ENCODE measurements at regions of chr4 and their contacts with region 1.

Region 1: DNA sequence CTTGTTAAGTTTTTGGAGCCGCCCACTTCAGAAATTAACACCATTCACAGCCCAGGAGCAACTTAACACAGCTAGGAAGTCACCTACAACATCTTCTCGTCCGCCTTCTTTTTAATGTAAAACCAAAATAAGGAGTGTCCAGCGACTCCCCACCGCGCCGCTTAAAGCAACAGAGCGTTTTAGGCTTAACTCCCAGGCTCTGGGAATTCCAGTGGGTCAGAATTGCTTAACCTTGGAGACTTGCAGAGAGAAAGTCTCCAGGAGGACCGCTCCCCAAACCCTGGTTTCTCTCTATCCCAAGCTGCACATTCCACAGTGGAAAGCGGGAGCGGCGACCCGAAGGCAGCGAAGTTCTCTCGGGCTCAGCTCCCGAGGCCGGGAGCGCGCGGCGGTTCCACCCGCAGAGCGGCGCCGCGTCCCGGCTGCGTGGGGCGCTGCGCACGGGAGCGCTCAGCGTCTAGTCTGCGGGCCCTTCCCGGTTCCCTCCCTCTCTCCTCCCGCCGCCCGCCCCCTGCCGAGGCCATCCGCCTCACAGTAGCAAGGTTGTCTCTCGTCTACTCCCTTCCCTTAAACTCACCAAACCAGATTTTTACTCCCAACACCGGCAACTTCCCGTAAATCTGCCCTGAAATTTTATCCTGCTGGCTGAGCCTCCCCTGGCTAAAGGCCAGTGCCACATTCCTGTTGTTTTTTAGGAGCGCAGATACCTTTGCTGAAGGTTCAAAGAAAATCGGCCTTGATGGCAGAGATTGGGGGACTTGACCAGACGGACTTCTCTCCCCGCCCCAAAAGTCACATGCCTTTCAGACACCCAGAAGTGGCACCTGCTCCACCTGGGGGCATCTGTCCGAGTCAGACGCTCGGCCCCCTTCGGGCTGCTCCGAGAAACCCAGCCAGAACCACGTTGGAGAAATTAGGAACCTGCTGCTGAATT is at the start of gene RBM47:
- H3K4me3 Mint-ChIP-seq: peak within 1 kb of the TSS; percentile 85
- H3K27ac Mint-ChIP-seq: peak within 1 kb of the TSS; percentile 99
- H3K4me1 Mint-ChIP-seq: peaks cover 54% of the 10 kb centered on the region
- H3K27me3 Mint-ChIP-seq: no peaks in the 10 kb centered on the region

Region 2: DNA sequence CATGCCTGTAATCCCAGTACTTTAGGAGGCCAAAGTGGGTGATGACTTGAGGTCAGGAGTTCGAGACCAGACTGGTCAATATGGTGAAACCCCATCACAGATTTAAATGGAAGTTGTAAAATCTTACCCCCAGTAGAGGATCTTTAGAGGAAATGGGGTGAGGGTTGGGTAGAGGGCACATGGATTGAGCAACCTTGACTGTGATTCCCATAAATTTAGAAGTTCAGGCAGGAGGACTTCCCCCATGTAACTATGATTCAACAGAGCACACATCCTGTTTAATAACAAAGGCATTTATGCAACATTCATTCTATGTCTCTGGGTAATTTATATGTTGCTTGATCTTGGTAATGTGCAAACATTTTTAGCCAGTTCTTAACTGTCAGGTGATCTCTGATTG is 143.1 kb before region 1 on chr4:
- intact Hi-C with region 1: no loop called
- H3K4me3 Mint-ChIP-seq: no peak overlapping the region
- H3K27ac Mint-ChIP-seq: peak overlapping the region; percentile 27
- H3K4me1 Mint-ChIP-seq: peaks cover 79% of the 10 kb centered on the region
- H3K27me3 Mint-ChIP-seq: no peaks in the 10 kb centered on the region

Region 3: GRCh38 chr4:40564004-40564403 is 65.7 kb before region 1 on chr4:
- intact Hi-C with region 1: loop called (anchors 5 kb)
- H3K4me3 Mint-ChIP-seq: no peak overlapping the region
- H3K27ac Mint-ChIP-seq: peak overlapping the region; percentile 82
- H3K4me1 Mint-ChIP-seq: peaks cover 87% of the 10 kb centered on the region
- H3K27me3 Mint-ChIP-seq: no peaks in the 10 kb centered on the region

Region 4: DNA sequence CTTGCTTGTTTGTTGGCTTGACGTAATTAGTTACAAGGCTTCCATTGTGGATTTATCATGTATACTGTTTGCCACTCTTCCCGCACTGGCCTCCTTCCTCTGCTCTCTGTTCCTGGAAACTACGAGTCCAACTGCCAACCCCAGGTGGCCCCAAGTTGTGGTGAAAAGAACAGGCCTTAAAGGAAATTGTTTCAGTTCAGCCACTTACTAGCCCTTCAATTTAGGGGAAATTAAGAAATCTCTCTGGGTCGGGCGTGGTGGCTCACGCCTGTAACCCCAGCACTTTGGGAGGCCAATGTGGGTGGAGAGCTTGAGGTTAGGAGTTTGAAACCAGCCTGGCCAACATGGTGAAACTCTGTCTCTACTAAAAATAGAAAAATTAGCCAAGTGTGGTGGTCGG is 28.0 kb before region 1 on chr4:
- intact Hi-C with region 1: loop called (anchors 2 kb)
- H3K4me3 Mint-ChIP-seq: peak overlapping the region; percentile 2
- H3K27ac Mint-ChIP-seq: peak overlapping the region; percentile 88
- H3K4me1 Mint-ChIP-seq: peaks cover 60% of the 10 kb centered on the region
- H3K27me3 Mint-ChIP-seq: no peaks in the 10 kb centered on the region

Region 5: GRCh38 chr4:40648742-40649281 is 19.1 kb after region 1 on chr4:
- intact Hi-C with region 1: loop called (anchors 2 kb)
- H3K4me3 Mint-ChIP-seq: peak overlapping the region; percentile 37
- H3K27ac Mint-ChIP-seq: peak overlapping the region; percentile 93
- H3K4me1 Mint-ChIP-seq: peaks cover 42% of the 10 kb centered on the region
- H3K27me3 Mint-ChIP-seq: no peaks in the 10 kb centered on the region

Region 6: DNA sequence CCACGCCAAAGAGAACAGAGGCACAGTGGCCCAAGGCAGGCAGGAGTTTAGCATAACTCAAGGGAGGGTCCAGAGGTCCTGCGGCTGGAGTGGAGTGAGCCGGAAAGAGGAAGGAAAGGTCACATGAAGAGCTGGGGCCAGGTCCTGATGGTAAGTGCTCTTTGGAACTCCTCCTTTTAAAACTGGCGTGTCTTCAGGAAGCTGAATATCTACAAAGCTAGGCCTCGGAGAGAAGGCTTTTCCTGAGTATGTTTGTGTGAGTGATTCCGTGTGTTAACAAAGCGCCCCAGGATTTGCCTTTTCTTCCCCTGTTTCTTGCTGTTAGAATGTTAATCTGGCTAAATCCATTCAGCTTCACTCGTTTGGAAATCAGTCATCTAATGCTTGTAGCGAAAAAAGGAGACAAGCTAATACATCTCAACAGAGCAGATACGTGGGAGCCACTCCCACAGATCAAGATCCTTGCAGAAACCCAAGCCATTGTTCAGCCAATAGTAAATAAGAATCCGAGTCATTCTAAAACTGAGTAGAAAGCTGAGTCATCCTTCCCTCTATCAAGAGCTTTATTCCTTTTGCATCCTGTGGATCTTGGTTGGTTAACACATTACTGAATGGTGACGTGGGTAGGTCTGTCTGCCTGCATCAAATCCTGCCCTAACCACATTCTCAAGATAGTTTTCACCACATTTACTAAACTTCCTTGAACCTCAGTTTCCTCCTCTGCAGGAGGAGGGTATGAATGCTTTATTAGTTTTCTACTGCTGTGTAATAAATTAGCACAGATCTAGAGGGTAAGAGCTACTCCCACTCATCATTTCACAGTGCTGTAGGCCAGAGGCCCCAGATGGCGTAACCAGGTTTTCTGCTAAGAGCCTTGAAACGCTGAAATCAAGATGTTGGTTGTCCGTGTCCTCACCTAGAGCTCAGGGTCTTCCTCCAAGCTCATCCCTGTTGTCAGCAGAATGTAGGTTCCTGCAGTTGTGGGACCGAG is 43.2 kb after region 1 on chr4:
- intact Hi-C with region 1: loop called (anchors 2 kb)
- H3K4me3 Mint-ChIP-seq: peak overlapping the region; percentile 53
- H3K27ac Mint-ChIP-seq: peak overlapping the region; percentile 91
- H3K4me1 Mint-ChIP-seq: peaks cover 33% of the 10 kb centered on the region
- H3K27me3 Mint-ChIP-seq: no peaks in the 10 kb centered on the region